B cell (primary cell): ENCODE measurements at regions of chr20 and their contacts with region 1.

Region 1: GRCh38 chr20:44210422-44211176 is at the start of gene OSER1:
- DNase-seq: peak; percentile 99
- ATAC-seq: peak; percentile 80
- H3K4me3 ChIP-seq: peak within 1 kb of the TSS; percentile 74 to 100 (median 96)
- H3K4me3 Mint-ChIP-seq: peak within 1 kb of the TSS; percentile 88
- H3K27ac ChIP-seq: peak within 1 kb of the TSS; percentile 95 to 99
- H3K27ac Mint-ChIP-seq: peak within 1 kb of the TSS; percentile 99
- H3K4me1 ChIP-seq: peaks cover 36 to 43% of the 10 kb centered on the region in 2 donors
- H3K4me1 Mint-ChIP-seq: peaks cover 60% of the 10 kb centered on the region
- H3K27me3 ChIP-seq: no peaks in the 10 kb centered on the region
- H3K27me3 Mint-ChIP-seq: no peaks in the 10 kb centered on the region
- CTCF ChIP-seq: no peak
- total RNA-seq, gene OSER1: 80.0 and 85.4 TPM in 2 replicates

Region 2: GRCh38 chr20:43666376-43667328 is 543.9 kb before region 1 on chr20 and contains the start of gene MYBL2:
- CTCF ChIA-PET with region 1: no interaction called
- POLR2A ChIA-PET with region 1: no interaction called
- intact Hi-C with region 1: loop called (anchors 5 kb)
- DNase-seq: peak; percentile 89
- ATAC-seq: peak; percentile 78
- H3K4me3 ChIP-seq: peak within 1 kb of the TSS; percentile 48 to 71 (median 66)
- H3K4me3 Mint-ChIP-seq: peak within 1 kb of the TSS; percentile 91
- H3K27ac ChIP-seq: no peak within 1 kb of the TSS
- H3K27ac Mint-ChIP-seq: peak within 1 kb of the TSS; percentile 95
- H3K4me1 ChIP-seq: peaks cover 9 to 58% of the 10 kb centered on the region in 2 donors
- H3K4me1 Mint-ChIP-seq: peaks cover 43% of the 10 kb centered on the region
- H3K27me3 ChIP-seq: peaks cover 0 to 10% (median 0%) of the 10 kb centered on the region in 4 experiments
- H3K27me3 Mint-ChIP-seq: no peaks in the 10 kb centered on the region
- CTCF ChIP-seq: no peak
- total RNA-seq, gene MYBL2: 35.8 and 37.9 TPM in 2 replicates

Region 3: DNA sequence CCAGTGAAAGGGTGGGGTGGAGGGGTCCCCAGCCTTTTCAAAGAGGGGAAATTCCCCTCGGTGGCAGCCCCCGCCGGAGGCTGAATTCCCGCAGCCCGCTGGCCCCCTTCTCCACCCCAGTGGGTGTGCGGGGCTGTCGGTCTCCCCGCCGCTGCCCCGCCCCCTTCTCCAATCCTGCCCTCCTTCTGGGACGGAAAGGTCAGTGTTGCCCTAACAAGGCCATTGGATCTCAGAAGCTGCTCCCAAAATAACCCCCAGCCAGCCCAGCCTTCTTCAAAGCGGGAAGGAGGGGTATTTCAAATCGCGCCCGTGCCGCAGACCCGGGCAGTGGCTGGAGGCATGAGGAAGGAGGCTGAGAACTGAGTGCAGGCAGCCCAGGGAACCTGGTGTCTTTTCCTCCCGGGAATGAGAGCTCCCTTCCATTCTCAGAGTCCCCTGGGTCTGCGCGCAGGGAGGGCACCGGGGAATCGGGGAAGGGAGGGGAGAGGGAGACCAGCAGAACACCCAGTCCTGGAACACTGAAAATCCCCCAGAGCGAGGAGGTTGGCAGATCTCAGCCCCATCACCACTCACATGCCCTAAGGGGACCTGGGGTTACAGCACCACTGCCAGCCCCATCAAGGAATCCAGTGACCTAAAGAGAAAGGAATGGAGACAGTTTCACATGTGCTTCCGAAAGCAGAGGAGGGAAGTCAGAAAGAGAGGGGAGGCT is 23.4 kb before region 1 on chr20 and contains the start of gene JPH2:
- CTCF ChIA-PET with region 1: interaction called, 15 read pairs
- POLR2A ChIA-PET with region 1: no interaction called
- intact Hi-C with region 1: no loop called
- DNase-seq: peak; percentile 27
- ATAC-seq: no peak
- H3K4me3 ChIP-seq: peak within 1 kb of the TSS in 4 of 5 experiments; percentile 0 to 42 (median 18)
- H3K4me3 Mint-ChIP-seq: peak within 1 kb of the TSS; percentile 80
- H3K27ac ChIP-seq: no peak within 1 kb of the TSS
- H3K27ac Mint-ChIP-seq: peak within 1 kb of the TSS; percentile 8
- H3K4me1 ChIP-seq: peaks cover 20 to 21% of the 10 kb centered on the region in 2 donors
- H3K4me1 Mint-ChIP-seq: peaks cover 32% of the 10 kb centered on the region
- H3K27me3 ChIP-seq: peaks cover 0 to 45% (median 15%) of the 10 kb centered on the region in 4 experiments
- H3K27me3 Mint-ChIP-seq: peaks cover 60% of the 10 kb centered on the region
- CTCF ChIP-seq: no peak
- total RNA-seq, gene JPH2: 0.10 and 0.17 TPM in 2 replicates

Region 4: DNA sequence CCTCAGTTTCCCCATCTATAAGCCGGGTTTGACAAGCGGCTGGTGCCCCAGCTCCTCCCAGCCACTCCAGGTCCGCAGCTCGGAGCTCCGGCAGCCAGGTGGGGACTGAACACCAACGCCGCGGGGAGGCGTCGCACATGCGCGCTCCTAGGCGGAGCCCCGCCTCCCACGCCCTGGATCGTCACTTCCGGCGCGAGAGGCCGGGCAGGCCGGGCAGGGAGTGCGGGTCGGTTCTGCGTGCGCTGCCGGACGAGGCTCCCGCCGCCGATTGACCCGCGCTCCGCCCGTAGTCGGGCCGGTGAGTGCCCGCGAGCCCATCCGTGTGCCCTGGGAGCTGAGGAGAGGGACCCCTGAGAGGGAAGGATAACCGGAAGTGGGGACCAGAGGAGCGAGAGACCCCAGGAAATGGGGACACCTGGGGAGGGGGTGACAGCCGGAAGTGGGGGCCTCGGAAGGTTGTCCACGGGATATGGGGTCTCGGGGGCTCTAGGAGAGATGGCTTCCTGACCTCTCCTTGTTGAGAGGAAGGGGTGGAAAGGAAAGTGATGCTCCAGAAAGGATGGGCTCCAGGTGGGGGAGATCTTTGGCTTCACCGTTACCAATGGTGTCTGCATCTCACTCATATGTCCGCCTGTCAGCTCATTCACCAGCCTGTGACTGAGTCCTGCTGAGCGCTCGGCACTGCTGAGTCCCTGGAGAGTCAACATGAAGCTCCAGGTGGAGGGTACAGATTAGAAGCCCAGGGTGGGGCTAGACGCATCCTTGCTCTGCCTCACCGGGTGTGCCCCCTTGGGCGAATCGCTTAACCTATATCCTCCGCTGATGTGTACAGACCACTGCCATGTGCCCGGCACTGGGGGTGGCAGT is 265.3 kb after region 1 on chr20 and contains the start of gene TTPAL:
- CTCF ChIA-PET with region 1: no interaction called
- POLR2A ChIA-PET with region 1: no interaction called
- intact Hi-C with region 1: loop called (anchors 2 kb)
- DNase-seq: peak; percentile 93
- ATAC-seq: peak; percentile 94
- H3K4me3 ChIP-seq: peak within 1 kb of the TSS; percentile 70 to 99 (median 78)
- H3K4me3 Mint-ChIP-seq: peak within 1 kb of the TSS; percentile 97
- H3K27ac ChIP-seq: peak within 1 kb of the TSS; percentile 90 to 93
- H3K27ac Mint-ChIP-seq: peak within 1 kb of the TSS; percentile 95
- H3K4me1 ChIP-seq: peaks cover 23 to 34% of the 10 kb centered on the region in 2 donors
- H3K4me1 Mint-ChIP-seq: peaks cover 43% of the 10 kb centered on the region
- H3K27me3 ChIP-seq: no peaks in the 10 kb centered on the region
- H3K27me3 Mint-ChIP-seq: peaks cover 2% of the 10 kb centered on the region
- CTCF ChIP-seq: no peak
- total RNA-seq, gene TTPAL: 26.8 and 27.8 TPM in 2 replicates

Region 5: DNA sequence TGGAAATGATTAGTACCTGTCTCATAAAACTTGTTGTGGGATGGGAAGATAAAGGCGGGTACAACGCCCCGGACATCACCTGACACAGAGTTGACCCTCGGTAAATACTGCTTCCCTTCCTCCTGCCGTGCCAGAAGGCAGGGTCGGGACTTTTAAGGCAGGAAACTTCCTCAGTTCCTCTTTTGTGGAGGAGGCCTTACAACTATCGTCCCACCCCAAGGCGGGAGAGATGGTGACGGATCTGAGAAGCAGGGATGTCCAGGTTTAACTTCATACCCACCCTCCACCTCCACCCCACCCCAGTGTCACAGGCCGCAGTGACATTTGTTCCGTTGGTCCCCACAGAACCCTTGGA is 1581.7 kb after region 1 on chr20:
- CTCF ChIA-PET with region 1: no interaction called
- POLR2A ChIA-PET with region 1: no interaction called
- intact Hi-C with region 1: loop called (anchors 5 kb)
- DNase-seq: peak; percentile 61
- ATAC-seq: peak; percentile 22
- H3K4me3 ChIP-seq: peak overlapping the region; percentile 72 to 95 (median 89)
- H3K4me3 Mint-ChIP-seq: peak overlapping the region; percentile 90
- H3K27ac ChIP-seq: peak overlapping the region; percentile 75 to 96
- H3K27ac Mint-ChIP-seq: peak overlapping the region; percentile 93
- H3K4me1 ChIP-seq: peaks cover 8 to 13% of the 10 kb centered on the region in 2 donors
- H3K4me1 Mint-ChIP-seq: peaks cover 19% of the 10 kb centered on the region
- H3K27me3 ChIP-seq: no peaks in the 10 kb centered on the region
- H3K27me3 Mint-ChIP-seq: no peaks in the 10 kb centered on the region
- CTCF ChIP-seq: no peak